Thyroid gland (tissue), 4 donors: ENCODE measurements at regions of chr15 and their contacts with region 1.

Region 1: DNA sequence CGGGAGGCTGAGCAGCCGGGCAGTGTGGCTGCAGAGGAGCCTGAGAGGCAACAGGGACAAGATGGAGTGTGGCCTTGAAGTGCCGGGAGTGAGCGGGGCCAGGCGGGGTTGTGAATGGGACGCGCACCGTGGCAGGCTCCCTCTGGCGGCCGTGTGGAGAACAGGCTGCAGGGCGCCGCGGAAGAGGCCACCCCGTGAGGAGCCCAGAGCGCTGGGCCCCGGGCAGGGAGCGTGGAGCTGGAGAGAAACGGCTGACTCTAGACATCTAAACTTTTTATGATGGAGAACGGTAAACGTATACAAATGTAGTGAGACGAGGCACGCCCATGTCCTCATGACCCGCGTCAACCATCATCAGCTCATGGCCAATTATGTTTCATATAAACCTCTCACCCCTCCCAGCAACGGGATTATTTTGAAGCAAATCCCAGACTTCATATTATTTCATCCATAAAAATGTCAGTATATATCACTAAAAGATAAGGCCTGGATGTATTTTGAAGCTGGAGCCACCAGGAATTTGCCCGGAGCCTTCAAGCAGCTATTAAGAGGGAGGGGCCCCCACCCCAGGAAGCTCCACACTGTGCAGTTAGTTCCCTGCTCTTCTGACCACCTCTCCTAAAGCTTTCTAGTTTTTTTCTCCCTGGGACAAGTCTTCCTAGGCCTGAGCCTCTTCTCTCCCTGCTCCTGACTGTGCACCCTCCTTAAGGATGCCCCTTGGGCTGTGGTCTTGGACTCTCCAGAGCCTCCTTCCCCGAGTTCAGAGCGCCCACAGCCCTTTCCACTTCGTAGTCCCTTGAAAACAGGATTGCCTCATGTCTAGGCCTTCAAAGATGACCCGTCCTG is 149.4 kb downstream of the SMAD6 start:
- DNase-seq: peak; percentile 88 to 92
- H3K4me3 ChIP-seq: no peak overlapping the region
- H3K27ac ChIP-seq: peak overlapping the region in 1 of 3 donors; percentile 49
- H3K4me1 ChIP-seq: peaks cover 7 to 16% of the 10 kb centered on the region in 2 donors
- H3K27me3 ChIP-seq: no peaks in the 10 kb centered on the region
- CTCF ChIP-seq: peak; percentile 86 to 98 (median 96)
- POLR2A ChIP-seq: no peak

Region 2: GRCh38 chr15:66603301-66604179 is 247.9 kb before region 1 on chr15:
- intact Hi-C with region 1: loop called (anchors 5 kb)
- DNase-seq: peak; percentile 62 to 65
- H3K4me3 ChIP-seq: no peak overlapping the region
- H3K27ac ChIP-seq: no peak overlapping the region
- H3K4me1 ChIP-seq: no peaks in the 10 kb centered on the region
- H3K27me3 ChIP-seq: no peaks in the 10 kb centered on the region
- CTCF ChIP-seq: peak; percentile 45 to 83 (median 74)
- POLR2A ChIP-seq: no peak

Region 3: DNA sequence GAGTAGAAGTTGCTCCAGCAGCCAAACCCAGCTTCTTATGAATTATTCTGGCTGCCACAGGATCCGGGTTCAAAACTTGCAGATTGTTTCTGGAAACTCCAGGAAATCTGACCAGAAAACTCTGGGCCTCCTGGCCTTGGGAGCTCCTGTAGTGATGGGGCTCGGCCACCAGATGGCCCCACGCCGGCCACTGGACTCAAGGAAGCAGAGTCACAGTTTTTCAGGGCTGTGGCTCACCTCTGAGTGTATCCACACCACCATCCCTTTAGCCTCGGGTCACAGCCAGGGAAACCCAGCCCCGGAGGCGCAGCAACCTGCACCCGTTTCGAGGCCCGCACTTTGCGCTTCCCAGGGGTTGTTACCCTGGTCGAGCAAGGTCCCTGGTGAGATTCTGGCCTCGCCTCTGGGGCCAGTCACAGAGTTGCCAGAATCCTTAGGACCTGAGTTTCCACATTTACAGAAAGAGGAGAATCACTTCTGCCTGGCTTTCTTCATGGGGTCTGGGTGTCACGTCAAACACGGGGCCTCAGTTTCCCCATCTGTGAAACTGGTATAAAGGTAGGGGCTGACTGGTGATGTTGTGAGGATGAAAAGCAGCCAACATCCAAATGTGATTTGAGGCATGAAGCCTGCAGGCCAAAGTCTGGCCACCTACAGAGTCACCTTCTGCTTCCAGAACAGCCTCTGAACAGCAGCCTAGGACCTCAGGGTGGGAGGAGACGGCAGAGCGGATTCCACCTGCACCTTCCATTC is 232.1 kb before region 1 on chr15:
- intact Hi-C with region 1: loop called (anchors 5 kb)
- DNase-seq: peak; percentile 76 to 82
- H3K4me3 ChIP-seq: no peak overlapping the region
- H3K27ac ChIP-seq: peak overlapping the region in 2 of 3 donors; percentile 45 to 78
- H3K4me1 ChIP-seq: peaks cover 11 to 56% of the 10 kb centered on the region in 2 donors
- H3K27me3 ChIP-seq: no peaks in the 10 kb centered on the region
- CTCF ChIP-seq: peak; percentile 76 to 90 (median 86)
- POLR2A ChIP-seq: no peak

Region 4: DNA sequence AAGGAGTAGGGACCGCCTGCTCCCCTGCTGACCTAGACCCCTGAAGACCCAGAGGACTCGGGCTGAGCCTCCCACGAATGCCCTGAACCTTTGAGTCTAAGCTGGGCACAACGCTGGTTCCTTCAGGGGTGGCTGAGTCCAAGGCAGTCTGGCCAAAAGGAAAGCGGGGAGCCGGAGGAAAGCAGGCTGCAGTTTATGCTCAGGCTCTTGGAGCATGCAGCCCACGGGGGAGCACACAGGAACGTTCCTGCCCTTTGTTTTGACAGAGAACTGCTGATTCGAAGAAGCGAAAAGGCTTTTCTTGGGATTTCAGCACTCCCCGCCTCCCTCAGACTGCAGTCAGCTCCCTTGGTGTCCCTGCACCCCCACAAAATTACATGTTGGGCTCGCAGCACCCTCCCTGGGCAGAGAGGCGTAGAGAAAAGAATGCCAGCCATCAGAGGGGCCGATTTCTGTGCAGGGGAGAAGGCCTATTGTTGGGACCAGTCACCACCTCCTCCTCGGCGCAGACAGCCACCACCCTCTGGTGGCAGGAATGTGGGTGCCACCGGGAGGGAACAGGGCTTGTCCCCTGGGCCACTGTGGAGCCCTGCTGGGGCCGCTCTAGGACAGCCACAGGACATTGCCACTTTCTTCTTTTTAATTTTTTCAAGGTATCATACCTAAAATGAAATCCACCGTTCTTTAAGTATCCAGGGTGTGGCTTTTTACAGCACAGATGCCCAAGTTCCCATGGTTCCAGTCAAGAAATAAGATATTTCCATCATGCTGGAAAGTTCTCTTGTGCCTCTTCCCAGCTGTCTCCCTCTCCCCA is 77.2 kb before region 1 on chr15:
- intact Hi-C with region 1: loop called (anchors 5 kb)
- DNase-seq: peak; percentile 95 to 96
- H3K4me3 ChIP-seq: peak overlapping the region in 1 of 3 donors; percentile 2
- H3K27ac ChIP-seq: peak overlapping the region; percentile 88 to 94 (median 92)
- H3K4me1 ChIP-seq: peaks cover 50 to 99% of the 10 kb centered on the region in 2 donors
- H3K27me3 ChIP-seq: no peaks in the 10 kb centered on the region
- CTCF ChIP-seq: peak; percentile 92 to 100 (median 97)
- POLR2A ChIP-seq: peak in 1 of 2 donors; percentile 54